ENCODE measurements at regions of chr7 and their contacts with region 1.

Region 1: DNA sequence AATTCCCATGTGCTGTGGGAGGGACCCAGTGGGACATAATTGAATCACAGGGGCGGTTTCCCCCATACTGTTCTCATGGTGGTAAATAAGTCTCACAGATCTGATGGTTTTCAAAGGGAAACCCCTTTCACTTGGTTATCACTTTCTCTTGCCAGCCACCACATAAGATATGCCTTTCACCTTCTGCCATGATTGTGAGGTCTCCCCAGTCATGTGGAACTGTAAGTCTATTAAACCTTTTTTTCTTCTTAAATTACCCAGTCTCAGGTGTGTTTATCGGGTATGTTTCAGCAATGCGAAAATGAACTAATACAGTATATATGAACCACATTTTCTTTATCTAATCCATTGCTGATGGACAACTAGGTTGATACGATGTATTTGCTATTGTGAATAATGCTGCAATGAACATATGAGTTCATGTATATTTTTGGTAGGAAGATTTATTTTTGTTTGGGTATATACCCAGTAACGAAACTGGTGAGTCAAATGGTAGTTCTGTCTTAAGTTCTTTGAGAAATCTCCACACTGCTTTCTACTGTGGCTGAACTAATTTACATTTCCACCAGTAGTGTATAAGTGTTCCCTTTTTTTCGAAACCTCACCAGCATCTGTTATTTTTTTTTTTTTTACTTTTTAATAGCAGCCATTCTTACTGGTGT is 70.0 kb upstream of the HGF start:
- DNase-seq: peak; percentile 30 to 43 (median 32)
- H3K4me3 ChIP-seq: no peak overlapping the region
- H3K4me3 Mint-ChIP-seq: peak overlapping the region in 1 of 2 donors; percentile 24
- H3K27ac ChIP-seq: peak overlapping the region in 1 of 2 donors; percentile 3
- H3K27ac Mint-ChIP-seq: peak overlapping the region; percentile 43 to 81 (median 57)
- H3K4me1 ChIP-seq: peaks cover 0 to under 1% of the 10 kb centered on the region in 2 donors
- H3K4me1 Mint-ChIP-seq: peaks cover 14% of the 10 kb centered on the region
- H3K27me3 ChIP-seq: no peaks in the 10 kb centered on the region
- H3K27me3 Mint-ChIP-seq: no peaks in the 10 kb centered on the region
- CTCF ChIP-seq: no peak

Region 2: DNA sequence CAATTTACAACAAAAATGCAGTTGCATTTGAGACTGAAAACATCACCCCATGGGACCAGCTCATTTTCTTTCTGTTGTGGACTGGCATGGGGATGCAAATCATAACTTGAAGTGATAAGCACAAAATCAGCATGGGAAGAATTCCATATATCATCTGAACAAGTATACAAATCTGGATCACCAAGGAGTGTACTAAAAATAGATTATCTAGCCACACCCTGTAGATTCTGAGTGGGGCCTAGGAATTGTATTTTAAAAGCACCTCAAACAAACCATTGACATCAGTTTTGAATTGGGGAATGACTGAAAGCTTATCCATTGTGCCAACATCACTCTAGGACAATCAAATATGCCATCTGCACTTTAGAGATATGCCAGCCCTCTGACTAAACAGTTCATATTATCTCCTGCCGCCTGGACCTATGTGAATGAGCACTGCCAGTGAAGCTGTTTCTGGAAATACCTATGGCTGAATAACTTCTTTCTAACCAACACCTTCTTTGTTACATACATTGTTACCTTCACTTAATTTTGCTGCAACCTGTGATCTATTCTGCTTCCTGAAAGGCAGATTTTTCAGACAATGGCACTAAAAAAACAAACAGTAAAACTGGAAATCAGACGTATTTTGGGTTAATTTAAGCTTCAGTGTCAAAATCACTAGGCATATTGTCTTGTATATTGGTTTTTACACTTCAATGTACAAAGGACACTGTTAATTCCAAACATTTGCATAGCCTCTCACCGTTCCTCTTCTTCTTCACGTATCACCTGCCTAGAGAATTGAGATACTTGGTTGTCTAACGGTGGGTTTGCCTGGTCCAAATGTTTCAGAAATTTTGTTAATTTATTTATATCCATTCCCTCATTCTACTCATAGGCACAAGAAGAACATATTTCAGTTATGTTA is 27.6 kb before region 1 on chr7:
- intact Hi-C with region 1: loop called in 1 of 2 experiments (anchors 5 kb)
- DNase-seq: no peak
- H3K4me3 ChIP-seq: no peak overlapping the region
- H3K4me3 Mint-ChIP-seq: no peak overlapping the region
- H3K27ac ChIP-seq: no peak overlapping the region
- H3K27ac Mint-ChIP-seq: no peak overlapping the region
- H3K4me1 ChIP-seq: peaks cover 21 to 22% of the 10 kb centered on the region in 2 donors
- H3K4me1 Mint-ChIP-seq: peaks cover 20% of the 10 kb centered on the region
- H3K27me3 ChIP-seq: no peaks in the 10 kb centered on the region
- H3K27me3 Mint-ChIP-seq: no peaks in the 10 kb centered on the region
- CTCF ChIP-seq: no peak